Lower leg skin (tissue), 4 donors: ENCODE measurements at regions of chr18 and their contacts with region 1.

Region 1: DNA sequence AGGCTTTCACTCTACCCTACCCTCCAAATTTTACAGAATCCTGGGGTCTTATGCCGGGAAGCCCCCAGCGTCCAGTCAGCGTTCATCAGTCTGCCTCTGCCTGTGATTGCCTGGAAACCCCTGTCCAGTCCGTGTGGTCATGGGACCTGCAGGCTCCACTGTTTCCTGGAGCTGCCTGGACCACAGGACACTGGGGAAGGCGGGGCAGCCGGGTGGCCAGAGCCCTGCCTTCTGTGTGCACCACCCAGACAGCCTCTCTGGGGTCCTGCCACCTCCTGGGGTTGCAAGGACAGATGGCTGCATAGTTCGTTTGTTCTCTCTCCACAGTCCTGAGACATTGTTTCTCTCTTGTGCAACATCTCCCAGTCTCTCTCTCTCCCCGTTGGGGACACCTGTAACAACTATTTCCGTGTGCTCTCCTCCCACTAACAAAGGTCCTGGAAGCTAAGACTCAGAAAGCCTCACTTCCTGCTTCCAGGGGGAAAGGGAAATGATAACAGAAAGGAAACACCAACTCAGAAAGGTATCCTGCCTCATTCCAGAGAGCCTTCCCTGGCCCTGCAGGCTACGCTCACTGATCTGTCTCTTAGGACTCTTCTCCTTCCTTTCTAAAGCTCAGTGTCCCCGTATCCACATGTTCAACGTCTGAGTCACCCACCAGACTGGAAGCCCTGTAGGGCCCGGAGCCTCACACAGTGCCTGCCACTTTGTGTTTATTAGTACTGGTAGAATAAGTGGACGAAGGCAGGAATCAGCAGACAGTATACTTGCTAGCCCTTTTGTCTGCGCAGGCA is 192.8 kb upstream of the RAB12 start:
- DNase-seq: peak in 1 of 2 donors; percentile 56
- H3K4me3 ChIP-seq: no peak overlapping the region
- CTCF ChIP-seq: no peak
- POLR2A ChIP-seq: no peak

Region 2: GRCh38 chr18:9209279-9209678 is 792.9 kb after region 1 on chr18:
- intact Hi-C with region 1: loop called (anchors 10 kb)
- DNase-seq: no peak
- H3K4me3 ChIP-seq: no peak overlapping the region
- CTCF ChIP-seq: no peak
- POLR2A ChIP-seq: no peak